ENCODE measurements at regions of chr10 and their contacts with region 1.

Region 1: DNA sequence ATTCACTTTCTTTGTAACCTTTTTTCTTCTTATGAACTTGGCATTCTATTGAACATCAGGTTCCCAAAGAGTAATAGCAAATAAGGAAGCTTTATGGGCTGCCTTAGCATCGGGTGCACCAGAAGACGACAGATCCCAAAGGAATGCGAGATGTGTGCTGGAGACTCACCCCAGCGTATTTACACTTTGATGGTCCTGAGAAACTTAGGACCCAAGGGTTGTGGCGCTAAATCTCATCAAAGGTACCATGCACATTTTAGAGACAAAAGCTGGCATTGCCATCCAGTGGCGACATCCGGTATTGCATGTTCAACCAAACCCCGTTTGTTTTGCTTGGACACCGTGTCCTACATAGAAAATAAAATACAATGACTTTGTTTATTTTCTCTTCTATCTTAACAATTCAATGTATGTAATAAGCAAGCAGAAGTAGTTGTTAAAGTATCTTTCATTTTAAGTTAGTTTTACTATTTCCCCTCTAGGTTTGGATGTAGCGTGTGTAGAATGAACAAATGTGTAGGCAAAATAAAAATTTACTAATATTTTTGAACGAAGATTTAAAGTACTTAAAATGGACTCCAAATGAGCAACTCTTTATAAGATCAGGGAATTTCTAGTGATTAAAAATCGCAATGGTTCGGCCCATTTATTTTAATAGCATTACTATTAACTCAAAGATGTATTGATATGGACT is 1154.8 kb downstream of the GATA3 start:
- DNase-seq: peak; percentile 39
- CTCF ChIP-seq: peak; percentile 81

Region 2: DNA sequence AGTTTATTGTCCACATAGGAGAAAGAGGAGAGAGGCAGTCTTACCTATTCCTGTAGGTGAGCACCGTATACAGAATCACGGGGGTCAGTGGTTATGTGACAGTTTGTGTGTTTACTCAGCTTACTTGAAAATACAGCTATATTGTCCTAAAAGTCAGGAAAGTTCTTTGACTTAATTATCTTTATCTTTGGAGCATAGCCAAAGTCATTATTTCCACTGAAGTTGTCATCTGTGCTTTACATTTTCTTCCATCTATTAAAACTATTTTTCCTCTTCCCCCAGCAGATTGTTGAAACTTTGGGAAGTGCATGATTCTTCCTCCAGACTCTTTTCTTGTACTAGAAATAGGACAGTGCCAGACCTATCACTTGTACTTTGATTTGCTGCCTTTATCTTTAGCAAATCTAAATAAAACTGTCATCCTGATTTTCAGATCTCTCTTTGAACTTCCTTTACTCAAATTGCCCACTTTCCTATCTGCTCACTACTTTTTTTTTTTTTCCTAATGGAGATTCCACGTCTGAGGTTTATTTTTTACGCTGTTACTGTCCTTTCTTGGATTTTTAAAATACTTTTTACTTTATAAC is 1332.6 kb before region 1 on chr10:
- CTCF ChIA-PET with region 1: interaction called, 10 read pairs
- POLR2A ChIA-PET with region 1: no interaction called
- DNase-seq: no peak
- CTCF ChIP-seq: no peak

Region 3: DNA sequence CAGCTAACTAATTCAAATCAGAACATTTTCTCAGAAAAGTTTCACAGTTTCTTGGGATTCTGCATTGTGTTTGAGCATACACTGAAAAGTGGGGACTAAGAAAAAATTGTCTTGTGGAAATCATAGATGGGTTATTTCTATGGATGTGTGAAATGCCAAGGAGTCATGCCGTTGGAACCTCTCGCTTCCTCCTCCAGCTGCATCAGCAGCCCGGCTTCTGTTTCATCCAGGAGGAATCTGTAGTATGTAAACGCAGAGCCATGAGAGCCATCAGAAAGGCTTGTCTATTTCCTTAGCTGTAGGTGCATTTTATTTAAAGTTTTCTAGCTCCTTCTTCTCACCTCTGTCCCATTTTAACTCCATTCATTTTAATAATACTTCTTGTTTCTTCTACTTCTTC is 10.6 kb before region 1 on chr10:
- CTCF ChIA-PET with region 1: interaction called, 31 read pairs
- POLR2A ChIA-PET with region 1: no interaction called
- DNase-seq: no peak
- CTCF ChIP-seq: no peak

Region 4: DNA sequence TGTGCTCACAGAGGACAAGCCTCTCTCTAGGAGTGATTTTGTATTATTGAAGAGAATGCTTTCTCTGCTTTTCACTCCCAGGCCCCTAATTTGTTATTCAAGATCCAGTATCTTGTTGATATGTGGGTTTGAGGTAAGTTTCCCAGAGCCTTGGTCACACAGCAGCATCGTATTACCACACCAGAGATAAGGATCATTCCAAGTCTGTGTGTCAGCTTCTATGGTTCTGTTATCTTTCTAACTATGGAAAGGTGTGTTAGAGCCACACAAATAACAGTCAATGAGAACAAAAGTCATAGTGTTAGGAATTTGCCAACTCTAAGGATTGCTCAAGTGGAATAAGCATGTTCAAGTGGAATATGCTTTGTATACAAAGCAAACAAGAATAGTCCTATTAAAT is 53.5 kb after region 1 on chr10:
- CTCF ChIA-PET with region 1: no interaction called
- POLR2A ChIA-PET with region 1: no interaction called
- DNase-seq: no peak
- CTCF ChIP-seq: no peak